Naive thymus-derived CD4-positive, alpha-beta T cell (primary cell): ENCODE measurements at regions of chr10 and their contacts with region 1.

Region 1: GRCh38 chr10:95246579-95247051 is 44.2 kb downstream of the PDLIM1 start:
- DNase-seq: peak in 7 of 9 donors; percentile 25 to 65 (median 43)
- ATAC-seq: peak; percentile 72
- H3K4me3 ChIP-seq: no peak overlapping the region
- H3K4me3 Mint-ChIP-seq: no peak overlapping the region
- H3K27ac ChIP-seq: no peak overlapping the region
- H3K27ac Mint-ChIP-seq: no peak overlapping the region
- H3K4me1 ChIP-seq: no peaks in the 10 kb centered on the region
- H3K4me1 Mint-ChIP-seq: peaks cover 0 to 38% (median 0%) of the 10 kb centered on the region in 7 donors
- H3K27me3 ChIP-seq: no peaks in the 10 kb centered on the region
- H3K27me3 Mint-ChIP-seq: peaks cover 2 to 28% (median 14%) of the 10 kb centered on the region in 5 donors

Region 2: DNA sequence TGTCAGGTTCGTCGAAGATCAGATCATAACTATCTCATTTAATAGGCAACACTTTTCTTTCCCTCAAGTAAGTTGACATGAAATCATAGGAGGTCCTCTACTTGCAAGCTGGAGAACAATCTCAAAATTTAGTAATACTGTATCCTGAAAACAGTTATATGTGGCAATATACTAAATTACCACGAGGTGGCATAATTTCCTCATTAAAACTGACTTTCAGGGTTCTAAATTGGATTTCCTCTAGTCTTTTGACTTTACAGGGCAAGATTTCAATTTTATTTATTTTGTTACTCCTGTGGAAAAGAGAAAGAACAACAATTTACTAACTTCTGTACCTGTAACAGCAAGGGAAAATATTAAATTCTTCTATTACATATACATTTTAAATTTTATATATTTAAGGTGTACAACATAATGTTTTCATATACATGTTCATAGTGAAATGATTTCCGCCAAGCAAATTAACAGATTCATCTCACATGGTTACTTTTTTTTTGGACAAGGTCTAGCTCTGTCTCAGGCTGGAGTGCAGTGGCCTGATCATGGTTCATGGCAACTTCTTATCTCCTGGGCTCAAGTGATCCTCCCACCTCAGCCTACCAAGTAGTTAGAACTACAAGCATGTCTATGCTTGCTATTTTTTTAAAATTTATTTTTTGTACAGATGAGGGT is 616.5 kb before region 1 on chr10:
- CTCF ChIA-PET with region 1: no interaction called
- POLR2A ChIA-PET with region 1: no interaction called
- intact Hi-C with region 1: loop called in 1 of 2 experiments (anchors 2 kb)
- DNase-seq: peak in 2 of 9 donors; percentile 4 to 5
- ATAC-seq: no peak
- H3K4me3 ChIP-seq: no peak overlapping the region
- H3K4me3 Mint-ChIP-seq: no peak overlapping the region
- H3K27ac ChIP-seq: no peak overlapping the region
- H3K27ac Mint-ChIP-seq: no peak overlapping the region
- H3K4me1 ChIP-seq: no peaks in the 10 kb centered on the region
- H3K4me1 Mint-ChIP-seq: peaks cover 0 to 4% (median 0%) of the 10 kb centered on the region in 7 donors
- H3K27me3 ChIP-seq: no peaks in the 10 kb centered on the region
- H3K27me3 Mint-ChIP-seq: peaks cover 0 to 5% (median 0%) of the 10 kb centered on the region in 5 donors

Region 3: DNA sequence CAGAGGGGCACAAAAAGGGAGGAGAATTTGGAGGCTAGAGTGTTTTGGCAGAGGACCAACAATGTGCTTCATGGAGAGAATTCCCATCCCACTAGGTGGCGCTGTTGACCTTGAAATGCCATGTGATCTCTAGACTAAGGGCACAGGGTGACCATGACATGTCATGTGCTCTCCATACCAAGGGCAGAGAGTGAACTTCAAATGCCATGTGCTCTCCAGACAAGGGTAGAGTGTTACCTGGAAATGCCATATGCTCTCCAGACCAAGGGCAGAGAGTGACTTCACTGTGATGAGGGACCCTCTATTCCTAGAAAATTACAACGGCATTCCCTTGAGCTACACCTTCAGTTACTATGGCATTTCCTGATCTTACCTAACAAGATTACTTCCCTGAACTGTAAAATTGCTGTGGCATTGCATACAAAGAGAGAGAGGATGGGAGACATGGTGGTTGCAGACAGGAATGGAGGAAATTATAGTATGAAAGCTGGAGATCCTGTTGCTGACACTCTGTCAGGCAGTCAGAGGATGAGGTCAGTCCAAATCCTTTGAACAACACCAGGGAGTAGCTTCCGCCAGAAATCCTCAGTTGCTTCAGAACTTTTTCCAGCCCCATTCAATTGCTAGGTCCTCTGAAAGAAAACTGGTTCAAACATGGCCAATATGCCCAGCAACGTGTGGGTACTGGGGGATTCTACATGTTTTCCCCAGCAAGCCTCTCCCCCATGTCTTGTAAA is 113.4 kb before region 1 on chr10:
- CTCF ChIA-PET with region 1: no interaction called
- POLR2A ChIA-PET with region 1: no interaction called
- intact Hi-C with region 1: loop called (anchors 1 kb)
- DNase-seq: peak in 8 of 9 donors; percentile 22 to 74 (median 48)
- ATAC-seq: peak; percentile 67
- H3K4me3 ChIP-seq: no peak overlapping the region
- H3K4me3 Mint-ChIP-seq: no peak overlapping the region
- H3K27ac ChIP-seq: no peak overlapping the region
- H3K27ac Mint-ChIP-seq: no peak overlapping the region
- H3K4me1 ChIP-seq: no peaks in the 10 kb centered on the region
- H3K4me1 Mint-ChIP-seq: no peaks in the 10 kb centered on the region
- H3K27me3 ChIP-seq: no peaks in the 10 kb centered on the region
- H3K27me3 Mint-ChIP-seq: peaks cover 0 to 9% (median 0%) of the 10 kb centered on the region in 5 donors

Region 4: GRCh38 chr10:95290461-95291364 is 44.1 kb after region 1 on chr10 and contains the start of gene PDLIM1:
- CTCF ChIA-PET with region 1: no interaction called
- POLR2A ChIA-PET with region 1: no interaction called
- intact Hi-C with region 1: loop called in 1 of 2 experiments (anchors 2 kb)
- DNase-seq: peak in 4 of 9 donors; percentile 16 to 57 (median 23)
- ATAC-seq: peak; percentile 82
- H3K4me3 ChIP-seq: peak within 1 kb of the TSS; percentile 43
- H3K4me3 Mint-ChIP-seq: peak within 1 kb of the TSS; percentile 71 to 88 (median 78)
- H3K27ac ChIP-seq: no peak within 1 kb of the TSS
- H3K27ac Mint-ChIP-seq: peak within 1 kb of the TSS in 2 of 9 donors; percentile 64 to 82
- H3K4me1 ChIP-seq: peaks cover 6 to 8% of the 10 kb centered on the region in 2 donors
- H3K4me1 Mint-ChIP-seq: peaks cover 11 to 51% (median 23%) of the 10 kb centered on the region in 7 donors
- H3K27me3 ChIP-seq: peaks cover 0 to 9% of the 10 kb centered on the region in 2 donors
- H3K27me3 Mint-ChIP-seq: peaks cover 39 to 59% (median 52%) of the 10 kb centered on the region in 5 donors
- total RNA-seq, gene PDLIM1: 0.32 to 27.6 (median 0.61) TPM